ENCODE measurements at regions of chr3 and their contacts with region 1.

Region 1: GRCh38 chr3:158845765-158846350 is 44.0 kb downstream of the MFSD1 start:
- DNase-seq: peak in 1 of 5 donors; percentile 21
- H3K4me3 ChIP-seq: no peak overlapping the region
- H3K27ac ChIP-seq: no peak overlapping the region
- H3K4me1 ChIP-seq: no peaks in the 10 kb centered on the region
- H3K27me3 ChIP-seq: no peaks in the 10 kb centered on the region
- CTCF ChIP-seq: peak; percentile 24 to 56 (median 42)
- EP300 ChIP-seq: no peak
- POLR2A ChIP-seq: no peak

Region 2: DNA sequence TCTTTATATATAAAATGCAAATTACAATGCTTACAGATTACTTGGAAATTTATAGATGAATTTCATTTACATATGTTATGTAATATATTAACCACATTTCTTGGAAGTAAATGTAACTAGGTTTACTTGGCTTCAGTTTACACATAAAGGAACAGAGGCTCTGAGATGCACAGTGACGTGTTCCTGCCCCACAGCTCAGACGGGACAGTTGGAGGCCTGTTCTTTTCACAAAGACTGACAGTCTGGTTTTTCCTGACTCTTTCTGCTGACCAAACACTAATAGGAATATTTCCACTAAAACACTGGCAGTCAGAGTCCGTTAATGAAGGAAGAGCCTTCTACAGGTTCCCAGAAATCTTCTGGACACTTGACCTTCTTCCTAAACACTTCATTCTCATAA is 292.1 kb after region 1 on chr3:
- intact Hi-C with region 1: no loop called
- DNase-seq: no peak
- H3K4me3 ChIP-seq: no peak overlapping the region
- H3K27ac ChIP-seq: no peak overlapping the region
- H3K4me1 ChIP-seq: no peaks in the 10 kb centered on the region
- H3K27me3 ChIP-seq: no peaks in the 10 kb centered on the region
- CTCF ChIP-seq: no peak
- EP300 ChIP-seq: no peak
- POLR2A ChIP-seq: no peak

Region 3: DNA sequence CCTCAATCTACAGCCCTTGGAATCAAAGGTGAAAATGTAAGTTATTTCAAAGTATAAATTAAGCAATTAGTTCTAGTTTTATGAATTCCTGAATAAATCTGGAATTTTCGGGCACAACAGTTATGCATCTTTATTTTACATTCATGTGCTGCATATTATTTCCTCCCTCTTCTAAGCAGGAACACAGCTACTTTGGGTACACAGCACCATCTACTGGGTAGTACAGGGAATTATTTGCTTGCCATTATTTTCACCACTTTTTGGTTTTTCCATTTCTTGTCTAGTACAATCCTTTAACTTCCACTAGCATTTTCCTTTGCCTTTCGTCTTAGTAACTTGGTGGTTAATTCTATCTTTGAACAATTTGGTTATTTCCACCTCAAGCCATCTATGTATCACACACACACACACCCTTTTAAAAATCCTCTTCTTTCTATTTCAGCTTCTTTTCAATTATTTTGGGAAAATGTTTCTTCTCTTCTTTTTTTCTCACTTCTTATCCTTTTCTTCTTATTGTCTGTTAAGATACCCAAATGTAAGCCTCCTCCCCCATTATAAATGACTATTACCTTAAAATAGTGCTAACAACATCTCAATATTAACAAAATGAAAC is 407.0 kb after region 1 on chr3:
- intact Hi-C with region 1: loop called in 2 of 4 experiments (anchors 5 to 10 kb)
- DNase-seq: no peak
- H3K4me3 ChIP-seq: no peak overlapping the region
- H3K27ac ChIP-seq: no peak overlapping the region
- H3K4me1 ChIP-seq: no peaks in the 10 kb centered on the region
- H3K27me3 ChIP-seq: no peaks in the 10 kb centered on the region
- CTCF ChIP-seq: no peak
- EP300 ChIP-seq: no peak
- POLR2A ChIP-seq: no peak

Region 4: DNA sequence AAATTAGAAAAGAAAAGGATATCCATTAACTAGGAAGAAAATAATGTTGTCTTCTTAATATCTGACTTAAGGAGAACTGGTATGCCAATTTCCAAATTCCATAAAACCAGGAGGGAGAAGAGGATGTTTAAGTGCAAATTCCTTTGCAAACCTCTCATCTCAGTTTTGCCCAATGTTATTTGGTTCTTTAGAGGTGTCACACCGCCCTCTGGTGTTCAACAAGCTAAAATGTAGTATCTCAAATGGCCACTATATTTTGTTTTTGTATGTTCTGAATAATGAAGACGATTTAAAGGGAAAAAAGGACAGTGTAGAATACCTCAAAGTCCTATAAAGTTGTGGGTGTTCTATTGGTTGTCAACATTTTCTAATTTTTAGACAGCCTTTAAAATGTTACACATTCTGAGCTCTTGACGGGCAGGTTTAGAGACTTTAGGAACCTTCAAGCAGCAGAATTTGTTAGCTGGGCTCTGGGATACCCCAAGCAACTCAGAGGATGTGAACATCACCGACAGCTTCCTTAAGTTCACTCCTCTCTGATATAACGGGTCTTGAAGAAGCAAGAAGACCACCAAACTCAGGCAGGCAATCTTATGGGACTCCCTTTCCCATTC is 414.3 kb after region 1 on chr3:
- intact Hi-C with region 1: loop called (anchors 5 to 10 kb)
- DNase-seq: peak in 3 of 5 donors; percentile 15 to 50 (median 34)
- H3K4me3 ChIP-seq: no peak overlapping the region
- H3K27ac ChIP-seq: no peak overlapping the region
- H3K4me1 ChIP-seq: no peaks in the 10 kb centered on the region
- H3K27me3 ChIP-seq: no peaks in the 10 kb centered on the region
- CTCF ChIP-seq: peak; percentile 31 to 78 (median 54)
- EP300 ChIP-seq: no peak
- POLR2A ChIP-seq: no peak

Measured in ovary (tissue), 10 donors.